ENCODE measurements at regions of chr17 and their contacts with region 1.

Region 1: GRCh38 chr17:43170766-43171585 is at the start of gene NBR1:
- DNase-seq: peak; percentile 99
- ATAC-seq: peak; percentile 77
- H3K4me3 ChIP-seq: peak within 1 kb of the TSS; percentile 70 to 99 (median 90)
- H3K4me3 Mint-ChIP-seq: no peak within 1 kb of the TSS
- H3K27ac ChIP-seq: peak within 1 kb of the TSS; percentile 100
- H3K27ac Mint-ChIP-seq: no peak within 1 kb of the TSS
- H3K4me1 ChIP-seq: peaks cover 20 to 39% of the 10 kb centered on the region in 2 donors
- H3K4me1 Mint-ChIP-seq: peaks cover 28% of the 10 kb centered on the region
- H3K27me3 ChIP-seq: no peaks in the 10 kb centered on the region
- H3K27me3 Mint-ChIP-seq: no peaks in the 10 kb centered on the region
- CTCF ChIP-seq: no peak
- total RNA-seq, gene NBR1: 42.1 and 43.9 TPM in 2 replicates

Region 2: GRCh38 chr17:42536048-42536371 is 635.0 kb before region 1 on chr17 and contains the start of gene NAGLU:
- CTCF ChIA-PET with region 1: no interaction called
- POLR2A ChIA-PET with region 1: no interaction called
- intact Hi-C with region 1: loop called (anchors 2 kb)
- DNase-seq: peak; percentile 95
- ATAC-seq: peak; percentile 90
- H3K4me3 ChIP-seq: peak within 1 kb of the TSS; percentile 51 to 82 (median 70)
- H3K4me3 Mint-ChIP-seq: peak within 1 kb of the TSS; percentile 93
- H3K27ac ChIP-seq: peak within 1 kb of the TSS; percentile 86 to 94
- H3K27ac Mint-ChIP-seq: peak within 1 kb of the TSS; percentile 87
- H3K4me1 ChIP-seq: peaks cover 24 to 31% of the 10 kb centered on the region in 2 donors
- H3K4me1 Mint-ChIP-seq: peaks cover 41% of the 10 kb centered on the region
- H3K27me3 ChIP-seq: no peaks in the 10 kb centered on the region
- H3K27me3 Mint-ChIP-seq: no peaks in the 10 kb centered on the region
- CTCF ChIP-seq: no peak
- total RNA-seq, gene NAGLU: 44.8 and 47.1 TPM in 2 replicates

Region 3: DNA sequence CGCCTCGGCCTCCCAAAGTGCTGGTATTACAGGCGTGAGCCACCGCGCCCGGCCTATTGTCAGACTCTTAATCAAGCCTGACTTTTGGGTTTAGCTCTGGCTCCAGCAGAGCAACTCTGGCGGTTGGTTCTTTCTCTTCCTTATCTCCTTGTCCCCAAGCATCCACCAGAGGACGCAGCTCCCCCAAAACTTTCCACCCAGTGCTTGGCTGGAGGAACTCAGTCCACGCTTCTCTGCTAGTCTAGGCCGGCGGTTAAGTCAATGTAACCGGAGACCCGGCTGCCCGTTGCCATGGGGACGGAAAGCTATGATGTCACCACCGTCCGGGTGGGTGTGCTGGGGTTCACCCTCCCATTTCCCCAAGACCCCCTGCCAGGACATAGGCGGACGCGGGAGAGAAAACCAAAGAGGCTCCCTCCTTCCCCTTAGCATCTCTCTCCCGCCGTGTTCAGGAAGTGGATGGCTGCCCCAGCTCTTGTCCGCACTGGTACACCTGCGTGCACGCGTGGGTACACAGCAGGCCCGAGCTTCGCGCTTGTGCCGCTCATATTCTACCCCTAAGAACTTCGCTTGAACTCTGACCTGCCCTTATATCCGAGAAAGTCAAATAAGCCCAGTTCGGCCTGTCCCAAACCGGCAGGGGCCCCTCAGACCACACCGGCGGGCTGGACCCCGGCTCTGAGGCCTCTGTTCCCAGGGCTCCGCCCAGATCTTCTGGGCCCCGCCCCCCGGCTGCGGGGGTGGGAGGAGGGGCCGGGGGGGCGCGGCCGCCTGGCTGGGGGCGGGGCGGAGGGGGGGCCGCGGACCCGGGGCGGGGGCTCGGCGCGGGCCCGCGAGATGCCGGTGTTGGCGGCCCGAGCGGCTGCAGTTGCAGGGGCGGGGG is 146.3 kb before region 1 on chr17 and contains the start of gene RND2:
- CTCF ChIA-PET with region 1: interaction called, 10 read pairs
- POLR2A ChIA-PET with region 1: interaction called, 5 read pairs
- intact Hi-C with region 1: loop called (anchors 1 kb)
- DNase-seq: peak; percentile 92
- ATAC-seq: peak; percentile 71
- H3K4me3 ChIP-seq: peak within 1 kb of the TSS; percentile 49 to 77 (median 68)
- H3K4me3 Mint-ChIP-seq: peak within 1 kb of the TSS; percentile 88
- H3K27ac ChIP-seq: peak within 1 kb of the TSS in 1 of 2 donors; percentile 63
- H3K27ac Mint-ChIP-seq: peak within 1 kb of the TSS; percentile 87
- H3K4me1 ChIP-seq: peaks cover 9 to 31% of the 10 kb centered on the region in 2 donors
- H3K4me1 Mint-ChIP-seq: peaks cover 29% of the 10 kb centered on the region
- H3K27me3 ChIP-seq: no peaks in the 10 kb centered on the region
- H3K27me3 Mint-ChIP-seq: no peaks in the 10 kb centered on the region
- CTCF ChIP-seq: peak; percentile 62
- total RNA-seq, gene RND2: 0.44 and 1.2 TPM in 2 replicates

Region 4: GRCh38 chr17:43211480-43212402 is 40.8 kb after region 1 on chr17 and contains the start of gene TMEM106A:
- CTCF ChIA-PET with region 1: interaction called, 6 read pairs
- POLR2A ChIA-PET with region 1: interaction called, 29 read pairs
- intact Hi-C with region 1: loop called (anchors 1 kb)
- DNase-seq: peak; percentile 90
- ATAC-seq: peak; percentile 88
- H3K4me3 ChIP-seq: peak within 1 kb of the TSS; percentile 71 to 92 (median 83)
- H3K4me3 Mint-ChIP-seq: peak within 1 kb of the TSS; percentile 99
- H3K27ac ChIP-seq: peak within 1 kb of the TSS; percentile 79 to 88
- H3K27ac Mint-ChIP-seq: peak within 1 kb of the TSS; percentile 98
- H3K4me1 ChIP-seq: peaks cover 21 to 27% of the 10 kb centered on the region in 2 donors
- H3K4me1 Mint-ChIP-seq: peaks cover 35% of the 10 kb centered on the region
- H3K27me3 ChIP-seq: no peaks in the 10 kb centered on the region
- H3K27me3 Mint-ChIP-seq: no peaks in the 10 kb centered on the region
- CTCF ChIP-seq: peak; percentile 62
- total RNA-seq, gene TMEM106A: 66.0 and 66.3 TPM in 2 replicates

Region 5: DNA sequence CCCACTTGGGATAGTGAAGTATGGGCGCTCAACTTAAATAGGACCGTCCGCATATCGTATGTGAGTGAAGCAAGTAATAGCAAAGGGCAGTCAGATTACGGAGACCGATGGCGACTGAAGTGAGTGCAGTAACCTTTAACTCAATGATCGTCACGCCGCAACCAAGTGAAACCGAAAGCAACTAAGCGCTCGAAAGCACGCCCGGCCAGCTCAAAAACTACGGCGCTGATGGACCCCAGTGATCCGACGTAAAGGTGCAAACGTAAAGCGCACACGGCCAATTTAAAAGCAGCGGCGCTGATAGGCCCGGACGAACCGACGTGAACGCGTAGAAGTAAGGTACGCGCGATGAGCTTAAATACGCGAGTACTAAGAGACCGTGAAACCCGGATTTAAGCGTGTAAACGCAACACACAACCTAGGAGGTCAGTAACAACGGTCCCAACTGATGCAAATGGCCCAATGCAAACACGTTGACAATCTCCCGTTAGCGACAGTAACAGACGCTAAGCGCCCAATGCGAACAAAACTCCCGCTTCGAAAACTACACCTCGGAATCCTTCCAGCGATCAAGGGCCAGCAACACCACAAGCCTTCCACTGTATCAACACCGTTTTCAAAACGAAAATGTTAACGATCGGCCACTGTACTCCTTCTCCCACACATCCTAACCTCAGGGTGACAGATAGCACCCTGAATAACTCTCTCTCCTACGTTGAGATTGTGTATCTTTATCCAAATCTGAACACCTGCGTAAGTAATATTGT is 189.9 kb after region 1 on chr17:
- CTCF ChIA-PET with region 1: no interaction called
- POLR2A ChIA-PET with region 1: no interaction called
- intact Hi-C with region 1: loop called (anchors 2 kb)
- DNase-seq: peak; percentile 94
- ATAC-seq: peak; percentile 80
- H3K4me3 ChIP-seq: peak overlapping the region; percentile 61 to 88 (median 70)
- H3K4me3 Mint-ChIP-seq: peak overlapping the region; percentile 96
- H3K27ac ChIP-seq: peak overlapping the region; percentile 97 to 99
- H3K27ac Mint-ChIP-seq: peak overlapping the region; percentile 100
- H3K4me1 ChIP-seq: peaks cover 9 to 15% of the 10 kb centered on the region in 2 donors
- H3K4me1 Mint-ChIP-seq: peaks cover 21% of the 10 kb centered on the region
- H3K27me3 ChIP-seq: no peaks in the 10 kb centered on the region
- H3K27me3 Mint-ChIP-seq: no peaks in the 10 kb centered on the region
- CTCF ChIP-seq: no peak

Region 6: GRCh38 chr17:43694077-43694870 is 523.3 kb after region 1 on chr17:
- CTCF ChIA-PET with region 1: no interaction called
- POLR2A ChIA-PET with region 1: no interaction called
- intact Hi-C with region 1: no loop called
- DNase-seq: peak; percentile 84
- ATAC-seq: peak; percentile 99
- H3K4me3 ChIP-seq: no peak overlapping the region
- H3K4me3 Mint-ChIP-seq: no peak overlapping the region
- H3K27ac ChIP-seq: no peak overlapping the region
- H3K27ac Mint-ChIP-seq: no peak overlapping the region
- H3K4me1 ChIP-seq: no peaks in the 10 kb centered on the region
- H3K4me1 Mint-ChIP-seq: no peaks in the 10 kb centered on the region
- H3K27me3 ChIP-seq: peaks cover 0 to 16% (median under 1%) of the 10 kb centered on the region in 4 experiments
- H3K27me3 Mint-ChIP-seq: peaks cover 29% of the 10 kb centered on the region
- CTCF ChIP-seq: peak; percentile 93

Measured in B cell (primary cell).